CD4-positive, alpha-beta memory T cell (primary cell): ENCODE measurements at regions of chr6 and their contacts with region 1.

Region 1: GRCh38 chr6:27772261-27773001 is 139.8 kb downstream of the OR2B2 start:
- DNase-seq: peak; percentile 82 to 85 (median 84)
- H3K4me3 ChIP-seq: no peak overlapping the region
- H3K4me3 Mint-ChIP-seq: peak overlapping the region in 5 of 8 donors; percentile 0 to 60 (median 51)
- H3K27ac ChIP-seq: no peak overlapping the region
- H3K27ac Mint-ChIP-seq: peak overlapping the region in 5 of 7 donors; percentile 4 to 80 (median 15)
- H3K4me1 ChIP-seq: peaks cover 11% of the 10 kb centered on the region
- H3K4me1 Mint-ChIP-seq: peaks cover 3 to 17% (median 9%) of the 10 kb centered on the region in 4 donors
- H3K27me3 ChIP-seq: peaks cover 5% of the 10 kb centered on the region
- H3K27me3 Mint-ChIP-seq: peaks cover 7 to 26% of the 10 kb centered on the region in 2 donors

Region 2: GRCh38 chr6:27359231-27359630 is 413.2 kb before region 1 on chr6:
- CTCF ChIA-PET with region 1: no interaction called
- POLR2A ChIA-PET with region 1: no interaction called
- intact Hi-C with region 1: no loop called
- DNase-seq: no peak
- H3K4me3 ChIP-seq: no peak overlapping the region
- H3K4me3 Mint-ChIP-seq: no peak overlapping the region
- H3K27ac ChIP-seq: no peak overlapping the region
- H3K27ac Mint-ChIP-seq: no peak overlapping the region
- H3K4me1 ChIP-seq: no peaks in the 10 kb centered on the region
- H3K4me1 Mint-ChIP-seq: no peaks in the 10 kb centered on the region
- H3K27me3 ChIP-seq: no peaks in the 10 kb centered on the region
- H3K27me3 Mint-ChIP-seq: peaks cover 0 to 2% of the 10 kb centered on the region in 2 donors

Region 3: GRCh38 chr6:27726620-27727023 is 45.8 kb before region 1 on chr6:
- CTCF ChIA-PET with region 1: no interaction called
- POLR2A ChIA-PET with region 1: no interaction called
- intact Hi-C with region 1: no loop called
- DNase-seq: no peak
- H3K4me3 ChIP-seq: no peak overlapping the region
- H3K4me3 Mint-ChIP-seq: no peak overlapping the region
- H3K27ac ChIP-seq: no peak overlapping the region
- H3K27ac Mint-ChIP-seq: no peak overlapping the region
- H3K4me1 ChIP-seq: no peaks in the 10 kb centered on the region
- H3K4me1 Mint-ChIP-seq: peaks cover 0 to 2% (median 0%) of the 10 kb centered on the region in 4 donors
- H3K27me3 ChIP-seq: peaks cover 4% of the 10 kb centered on the region
- H3K27me3 Mint-ChIP-seq: peaks cover 27 to 29% of the 10 kb centered on the region in 2 donors

Region 4: DNA sequence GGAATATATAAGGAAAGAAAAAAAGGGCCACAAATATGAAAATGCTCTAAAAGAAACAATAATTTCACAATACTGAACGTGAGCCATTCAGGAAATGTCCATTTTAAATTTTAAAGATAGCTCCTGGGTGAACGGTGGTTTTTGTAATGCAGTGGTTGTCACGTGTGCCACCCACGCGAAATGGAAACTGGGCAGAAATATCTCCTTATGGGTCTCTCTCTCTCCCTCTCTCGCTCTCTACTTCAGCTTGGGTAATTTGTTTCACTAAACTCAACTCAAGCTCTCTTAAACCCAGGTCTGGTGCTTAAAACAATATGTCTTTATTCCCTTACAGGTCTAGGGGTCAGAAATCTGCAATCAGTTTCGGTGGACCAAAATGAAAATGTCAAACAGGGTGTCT is 11.0 kb before region 1 on chr6:
- CTCF ChIA-PET with region 1: interaction called, 70 read pairs
- POLR2A ChIA-PET with region 1: interaction called, 4 read pairs
- intact Hi-C with region 1: no loop called
- DNase-seq: no peak
- H3K4me3 ChIP-seq: no peak overlapping the region
- H3K4me3 Mint-ChIP-seq: peak overlapping the region in 2 of 8 donors; percentile 13 to 39
- H3K27ac ChIP-seq: no peak overlapping the region
- H3K27ac Mint-ChIP-seq: no peak overlapping the region
- H3K4me1 ChIP-seq: peaks cover 12% of the 10 kb centered on the region
- H3K4me1 Mint-ChIP-seq: peaks cover 11 to 20% (median 16%) of the 10 kb centered on the region in 4 donors
- H3K27me3 ChIP-seq: no peaks in the 10 kb centered on the region
- H3K27me3 Mint-ChIP-seq: no peaks in the 10 kb centered on the region

Region 5: DNA sequence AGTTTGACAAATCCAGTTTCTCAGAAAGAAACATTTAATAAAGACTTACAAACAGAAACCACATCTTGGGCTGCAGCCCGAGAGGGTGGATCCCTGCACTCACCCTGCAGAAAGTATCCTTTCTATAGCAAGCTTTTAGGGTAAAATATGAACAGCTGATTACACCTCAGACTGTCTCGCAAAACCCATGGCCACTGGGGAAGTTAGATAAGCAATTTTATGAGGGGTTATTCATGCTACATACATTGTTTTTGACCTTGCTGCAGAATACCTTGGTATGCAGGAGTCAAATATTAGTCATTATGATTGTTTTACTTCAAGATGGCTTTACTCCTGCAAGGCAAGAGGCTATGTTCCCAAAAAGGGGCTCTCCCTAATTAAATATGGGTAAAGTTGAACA is 12.9 kb after region 1 on chr6:
- CTCF ChIA-PET with region 1: interaction called, 29 read pairs
- POLR2A ChIA-PET with region 1: no interaction called
- intact Hi-C with region 1: no loop called
- DNase-seq: no peak
- H3K4me3 ChIP-seq: no peak overlapping the region
- H3K4me3 Mint-ChIP-seq: no peak overlapping the region
- H3K27ac ChIP-seq: no peak overlapping the region
- H3K27ac Mint-ChIP-seq: no peak overlapping the region
- H3K4me1 ChIP-seq: no peaks in the 10 kb centered on the region
- H3K4me1 Mint-ChIP-seq: no peaks in the 10 kb centered on the region
- H3K27me3 ChIP-seq: no peaks in the 10 kb centered on the region
- H3K27me3 Mint-ChIP-seq: peaks cover 12 to 24% of the 10 kb centered on the region in 2 donors

Region 6: GRCh38 chr6:27795697-27796494 is 23.5 kb after region 1 on chr6:
- CTCF ChIA-PET with region 1: interaction called, 8 read pairs
- POLR2A ChIA-PET with region 1: interaction called, 12 read pairs
- intact Hi-C with region 1: loop called (anchors 1 kb)
- DNase-seq: peak; percentile 75 to 82 (median 80)
- H3K4me3 ChIP-seq: no peak overlapping the region
- H3K4me3 Mint-ChIP-seq: peak overlapping the region in 1 of 8 donors; percentile 16
- H3K27ac ChIP-seq: no peak overlapping the region
- H3K27ac Mint-ChIP-seq: peak overlapping the region in 5 of 7 donors; percentile 6 to 91 (median 35)
- H3K4me1 ChIP-seq: peaks cover 21% of the 10 kb centered on the region
- H3K4me1 Mint-ChIP-seq: peaks cover 17 to 29% (median 21%) of the 10 kb centered on the region in 4 donors
- H3K27me3 ChIP-seq: peaks cover 6% of the 10 kb centered on the region
- H3K27me3 Mint-ChIP-seq: peaks cover 6 to 13% of the 10 kb centered on the region in 2 donors